MCF 10A (cell line): ENCODE measurements at regions of chr12 and their contacts with region 1.

Region 1: GRCh38 chr12:57124259-57124877 is 3.9 kb upstream of the LRP1 start:
- DNase-seq: peak; percentile 85
- H3K4me3 Mint-ChIP-seq: no peak overlapping the region
- H3K27ac Mint-ChIP-seq: no peak overlapping the region
- H3K4me1 Mint-ChIP-seq: peaks cover 11% of the 10 kb centered on the region
- H3K27me3 Mint-ChIP-seq: no peaks in the 10 kb centered on the region
- CTCF ChIP-seq: peak; percentile 90

Region 2: GRCh38 chr12:57078519-57079404 is 45.6 kb before region 1 on chr12 and contains the start of gene NEMP1:
- CTCF ChIA-PET with region 1: interaction called, 31 read pairs
- POLR2A ChIA-PET with region 1: interaction called, 4 read pairs
- intact Hi-C with region 1: no loop called
- DNase-seq: peak; percentile 100
- H3K4me3 Mint-ChIP-seq: peak within 1 kb of the TSS; percentile 100
- H3K27ac Mint-ChIP-seq: peak within 1 kb of the TSS; percentile 97
- H3K4me1 Mint-ChIP-seq: no peaks in the 10 kb centered on the region
- H3K27me3 Mint-ChIP-seq: no peaks in the 10 kb centered on the region
- CTCF ChIP-seq: no peak
- total RNA-seq, gene NEMP1: 17.5 and 22.5 TPM in 2 replicates

Region 3: DNA sequence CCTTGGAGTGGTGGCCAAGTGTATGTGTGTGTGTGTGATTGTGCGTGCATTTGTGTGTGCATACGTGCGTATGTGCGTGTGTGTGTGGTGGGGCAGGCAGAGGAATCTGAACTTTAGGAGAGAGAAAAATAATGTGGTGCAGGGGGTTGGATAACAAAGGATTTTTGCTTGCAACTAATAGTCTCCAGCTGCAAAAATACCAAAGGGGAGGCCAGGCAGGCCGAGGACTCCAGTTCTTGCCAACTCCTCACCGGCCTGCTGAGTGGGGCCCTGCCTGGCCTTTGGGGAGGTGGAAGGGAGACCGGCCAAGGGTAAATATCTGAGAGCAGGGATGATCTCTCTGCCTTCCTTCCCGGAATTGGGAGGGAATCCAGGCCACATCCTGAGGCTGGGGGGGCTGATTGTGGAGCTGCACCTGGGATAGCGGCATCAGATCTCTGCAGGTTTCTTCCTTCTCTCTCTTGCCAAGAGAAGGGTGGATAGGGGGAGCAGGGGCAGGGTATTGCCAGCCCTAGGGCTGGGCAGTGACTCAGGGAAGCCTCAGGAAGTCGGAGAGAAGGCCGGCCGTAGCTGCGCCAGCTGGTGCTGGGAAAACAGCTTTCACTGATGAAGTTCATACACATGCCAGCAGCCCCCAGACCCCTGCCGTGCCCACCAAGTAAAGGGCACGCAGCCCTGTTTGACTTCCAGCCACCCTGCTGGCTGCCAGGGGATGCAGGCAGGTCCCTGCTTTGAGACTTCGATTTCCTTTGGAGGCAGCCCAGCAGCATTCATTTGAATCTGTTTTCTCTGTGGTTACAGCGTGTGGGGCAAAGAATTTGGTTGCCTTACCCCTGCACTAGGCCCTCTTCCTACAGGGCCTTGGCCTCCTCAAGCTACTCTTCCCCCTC is 27.6 kb after region 1 on chr12:
- CTCF ChIA-PET with region 1: interaction called, 10 read pairs
- POLR2A ChIA-PET with region 1: interaction called, 36 read pairs
- intact Hi-C with region 1: no loop called
- DNase-seq: peak; percentile 89
- H3K4me3 Mint-ChIP-seq: peak overlapping the region; percentile 29
- H3K27ac Mint-ChIP-seq: peak overlapping the region; percentile 70
- H3K4me1 Mint-ChIP-seq: peaks cover 57% of the 10 kb centered on the region
- H3K27me3 Mint-ChIP-seq: no peaks in the 10 kb centered on the region
- CTCF ChIP-seq: no peak

Region 4: DNA sequence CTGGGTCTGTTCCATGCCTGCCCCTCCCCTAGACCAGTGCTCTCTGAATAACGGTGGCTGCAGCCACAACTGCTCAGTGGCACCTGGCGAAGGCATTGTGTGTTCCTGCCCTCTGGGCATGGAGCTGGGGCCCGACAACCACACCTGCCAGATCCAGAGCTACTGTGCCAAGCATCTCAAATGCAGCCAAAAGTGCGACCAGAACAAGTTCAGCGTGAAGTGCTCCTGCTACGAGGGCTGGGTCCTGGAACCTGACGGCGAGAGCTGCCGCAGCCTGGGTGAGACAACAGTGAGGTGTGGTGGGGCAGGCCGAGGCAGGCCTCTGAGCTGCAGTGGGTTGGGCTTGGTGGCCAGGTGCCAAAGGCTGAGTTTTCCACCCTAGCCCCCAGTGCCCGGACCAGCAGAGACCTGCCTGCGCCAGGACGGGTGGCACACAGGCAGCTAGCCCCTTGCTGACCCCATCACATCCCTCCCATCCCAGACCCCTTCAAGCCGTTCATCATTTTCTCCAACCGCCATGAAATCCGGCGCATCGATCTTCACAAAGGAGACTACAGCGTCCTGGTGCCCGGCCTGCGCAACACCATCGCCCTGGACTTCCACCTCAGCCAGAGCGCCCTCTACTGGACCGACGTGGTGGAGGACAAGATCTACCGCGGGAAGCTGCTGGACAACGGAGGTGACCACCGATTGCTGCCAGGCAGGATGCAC is 51.2 kb after region 1 on chr12:
- CTCF ChIA-PET with region 1: interaction called, 530 read pairs
- POLR2A ChIA-PET with region 1: interaction called, 111 read pairs
- intact Hi-C with region 1: loop called (anchors 1 kb)
- DNase-seq: peak; percentile 94
- H3K4me3 Mint-ChIP-seq: peak overlapping the region; percentile 32
- H3K27ac Mint-ChIP-seq: peak overlapping the region; percentile 68
- H3K4me1 Mint-ChIP-seq: peaks cover 41% of the 10 kb centered on the region
- H3K27me3 Mint-ChIP-seq: no peaks in the 10 kb centered on the region
- CTCF ChIP-seq: peak; percentile 91

Region 5: GRCh38 chr12:57190037-57190436 is 65.7 kb after region 1 on chr12:
- CTCF ChIA-PET with region 1: interaction called, 530 read pairs
- POLR2A ChIA-PET with region 1: interaction called, 7 read pairs
- intact Hi-C with region 1: no loop called
- DNase-seq: no peak
- H3K4me3 Mint-ChIP-seq: no peak overlapping the region
- H3K27ac Mint-ChIP-seq: no peak overlapping the region
- H3K4me1 Mint-ChIP-seq: no peaks in the 10 kb centered on the region
- H3K27me3 Mint-ChIP-seq: no peaks in the 10 kb centered on the region
- CTCF ChIP-seq: no peak